ENCODE measurements at regions of chrX and their contacts with region 1.

Region 1: GRCh38 chrX:118459494-118459893 is 36.1 kb upstream of the DOCK11 start:
- DNase-seq: peak; percentile 51
- H3K4me3 Mint-ChIP-seq: no peak overlapping the region
- H3K27ac Mint-ChIP-seq: no peak overlapping the region
- H3K4me1 Mint-ChIP-seq: no peaks in the 10 kb centered on the region
- H3K27me3 Mint-ChIP-seq: no peaks in the 10 kb centered on the region
- CTCF ChIP-seq: peak; percentile 46

Region 2: GRCh38 chrX:118474586-118474985 is 15.1 kb after region 1 on chrX:
- CTCF ChIA-PET with region 1: interaction called, 10 read pairs
- POLR2A ChIA-PET with region 1: no interaction called
- intact Hi-C with region 1: no loop called
- DNase-seq: no peak
- H3K4me3 Mint-ChIP-seq: no peak overlapping the region
- H3K27ac Mint-ChIP-seq: no peak overlapping the region
- H3K4me1 Mint-ChIP-seq: no peaks in the 10 kb centered on the region
- H3K27me3 Mint-ChIP-seq: no peaks in the 10 kb centered on the region
- CTCF ChIP-seq: no peak